Mammary epithelial cell (primary cell): ENCODE measurements at regions of chr10 and their contacts with region 1.

Region 1: DNA sequence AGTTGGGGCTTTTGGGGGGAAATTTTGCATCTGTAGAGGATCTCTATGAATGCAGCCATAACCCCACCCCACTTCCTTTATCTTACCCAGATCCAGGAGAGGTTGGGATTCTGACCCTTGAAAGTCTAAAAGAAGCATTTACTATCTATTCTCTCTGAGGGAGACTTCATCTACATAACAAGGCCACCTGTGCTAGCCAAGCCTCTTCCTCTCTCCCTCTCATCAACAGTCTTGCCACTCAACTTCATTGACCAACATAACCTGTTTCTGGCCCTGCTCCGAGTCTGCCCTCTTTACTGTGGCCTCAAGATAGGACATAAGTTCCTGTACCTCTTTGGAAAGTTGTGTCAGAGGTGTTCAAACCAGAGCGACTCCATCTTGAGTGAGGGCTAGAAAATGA is 19.4 kb downstream of the TUBAL3 start:
- DNase-seq: no peak
- H3K4me3 ChIP-seq: no peak overlapping the region
- H3K27ac ChIP-seq: no peak overlapping the region
- H3K4me1 ChIP-seq: no peaks in the 10 kb centered on the region
- H3K27me3 ChIP-seq: no peaks in the 10 kb centered on the region
- CTCF ChIP-seq: no peak

Region 2: GRCh38 chr10:5014936-5015335 is 370.3 kb before region 1 on chr10:
- CTCF ChIA-PET with region 1: no interaction called
- dilution Hi-C with region 1: no loop called
- in situ Hi-C with region 1: no loop called
- intact Hi-C with region 1: loop called (anchors 5 kb)
- DNase-seq: no peak
- H3K4me3 ChIP-seq: no peak overlapping the region
- H3K27ac ChIP-seq: no peak overlapping the region
- H3K4me1 ChIP-seq: peaks cover 12% of the 10 kb centered on the region
- H3K27me3 ChIP-seq: no peaks in the 10 kb centered on the region
- CTCF ChIP-seq: peak; percentile 16 to 43

Region 3: DNA sequence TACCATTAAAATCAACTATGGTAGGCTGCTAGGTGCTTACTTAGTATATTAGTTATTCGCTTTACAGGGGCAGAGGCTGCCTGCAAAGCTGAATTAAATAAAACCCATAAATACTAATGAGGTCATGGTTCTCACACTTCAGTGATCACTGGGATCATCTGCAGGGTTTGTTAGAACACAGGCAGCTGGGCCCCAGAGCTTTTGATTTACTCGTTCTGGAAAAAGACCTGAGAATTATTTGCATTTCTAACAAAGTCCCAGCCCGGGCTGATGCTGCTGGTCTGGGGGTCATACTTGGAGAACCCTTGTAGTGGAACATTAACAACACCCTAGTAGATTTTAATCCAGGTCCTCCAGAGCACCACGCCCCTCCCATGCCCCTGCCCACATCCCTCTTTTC is 11.9 kb before region 1 on chr10:
- CTCF ChIA-PET with region 1: no interaction called
- dilution Hi-C with region 1: no loop called
- in situ Hi-C with region 1: no loop called
- intact Hi-C with region 1: no loop called
- DNase-seq: no peak
- H3K4me3 ChIP-seq: no peak overlapping the region
- H3K27ac ChIP-seq: no peak overlapping the region
- H3K4me1 ChIP-seq: no peaks in the 10 kb centered on the region
- H3K27me3 ChIP-seq: no peaks in the 10 kb centered on the region
- CTCF ChIP-seq: no peak